Esophagus squamous epithelium (tissue), 5 donors: ENCODE measurements at regions of chr10 and their contacts with region 1.

Region 1: DNA sequence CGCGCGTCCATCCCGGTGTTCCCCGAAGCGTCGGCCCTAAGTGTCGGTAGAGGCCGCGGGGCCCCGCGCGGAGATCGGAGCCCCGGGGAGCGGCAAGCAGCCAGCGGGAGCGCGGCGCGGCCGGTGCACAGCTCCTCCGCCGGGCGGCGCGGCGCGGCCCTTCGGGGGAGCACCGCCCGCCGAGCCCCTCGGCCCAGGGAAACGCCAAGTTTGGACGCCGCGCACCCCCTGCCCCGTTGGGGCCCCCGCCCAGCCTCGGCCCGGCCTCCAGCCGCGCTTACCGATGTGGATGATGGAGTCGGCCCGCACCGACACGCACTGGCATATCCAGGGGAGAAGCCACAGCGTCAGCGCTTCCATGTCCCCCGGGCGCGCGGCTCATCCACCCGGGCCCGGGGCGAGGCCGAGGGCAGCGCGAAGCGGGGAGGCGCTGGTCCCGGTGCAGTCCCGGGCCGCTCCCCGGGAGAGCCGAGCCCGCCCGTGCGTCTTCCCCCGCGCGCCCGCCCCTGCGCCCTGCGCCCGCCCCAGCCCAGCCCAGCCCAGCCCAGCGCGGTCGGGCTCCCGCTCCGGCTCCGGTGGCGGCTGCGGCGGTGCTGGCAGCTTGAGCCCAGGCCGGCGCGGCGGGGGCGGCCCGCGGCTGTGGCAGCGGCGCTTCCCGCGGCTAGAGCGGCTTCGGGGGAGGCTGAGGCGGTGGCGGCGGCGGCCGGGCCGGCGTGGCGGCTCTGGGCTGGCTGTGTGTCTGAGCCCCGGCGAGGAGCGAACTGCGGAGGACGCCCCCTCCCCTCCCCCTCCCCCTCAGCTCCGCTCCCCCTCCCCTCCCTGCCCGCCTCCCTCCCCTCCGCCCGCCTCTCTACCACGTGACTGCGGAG is at the start of gene GRID1:
- DNase-seq: no peak
- H3K4me3 ChIP-seq: peak within 1 kb of the TSS; percentile 33 to 66 (median 51)
- H3K27ac ChIP-seq: peak within 1 kb of the TSS in 2 of 4 donors; percentile 56 to 62
- H3K4me1 ChIP-seq: peaks cover 14 to 51% (median 41%) of the 10 kb centered on the region in 3 donors
- H3K27me3 ChIP-seq: peaks cover 12 to 100% (median 22%) of the 10 kb centered on the region in 4 donors
- CTCF ChIP-seq: peak in 1 of 6 experiments; percentile 7
- POLR2A ChIP-seq: no peak
- total RNA-seq, gene GRID1: 0.03 to 2.7 (median 0.49) TPM

Region 2: GRCh38 chr10:85548034-85548433 is 818.2 kb before region 1 on chr10:
- intact Hi-C with region 1: loop called (anchors 10 kb)
- DNase-seq: no peak
- H3K4me3 ChIP-seq: no peak overlapping the region
- H3K27ac ChIP-seq: no peak overlapping the region
- H3K4me1 ChIP-seq: no peaks in the 10 kb centered on the region
- H3K27me3 ChIP-seq: no peaks in the 10 kb centered on the region
- CTCF ChIP-seq: peak in 5 of 6 experiments; percentile 20 to 46 (median 26)
- POLR2A ChIP-seq: no peak